Activated T-helper 1 cell treated with anti-CD3 and anti-CD28 coated beads, Interleukin-12 subunit alpha, Interleukin-12 subunit beta, Interleukin-2, Interleukin-4 antibody, amounts not matched to agents 30 ng/mL and 10 ng/mL and 1 ng/mL, durations not matched to agents 14 hours and 24 hours and 36 hours (primary cell): ENCODE measurements at regions of chr7 and their contacts with region 1.

Region 1: DNA sequence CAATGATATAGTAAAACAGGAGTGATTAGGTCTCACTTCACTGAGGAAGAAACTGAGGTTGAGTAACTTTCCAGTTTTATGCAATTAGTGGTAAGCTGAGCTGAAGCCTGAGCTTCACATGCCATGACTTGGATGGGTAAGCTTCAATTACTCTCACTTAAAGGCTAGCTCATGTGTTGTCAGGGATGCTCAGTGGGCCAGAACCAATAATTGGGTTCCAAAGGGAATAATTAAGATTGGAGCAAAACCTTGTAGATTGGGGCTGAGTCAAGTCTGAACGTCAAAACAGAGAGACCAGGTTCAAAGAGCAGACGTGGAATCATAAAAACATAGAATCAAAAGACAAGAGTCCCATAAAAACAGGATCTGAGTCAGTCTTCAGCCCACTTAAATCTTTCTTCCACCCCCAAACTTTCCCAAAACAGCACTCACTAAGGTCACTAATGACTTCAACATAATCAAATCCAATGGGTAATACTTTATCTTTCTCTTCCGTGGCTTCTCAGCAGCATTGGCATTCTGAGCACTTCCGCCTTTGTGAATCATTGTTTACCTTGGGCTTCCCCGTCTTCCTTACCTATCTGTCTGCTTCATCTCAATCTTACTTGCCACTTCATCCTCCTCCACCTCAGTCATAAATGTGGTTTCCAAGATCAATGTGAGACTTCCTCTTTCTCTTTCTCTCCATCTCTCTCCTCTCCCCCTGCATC is 23.0 kb upstream of the EGFR start:
- DNase-seq: peak; percentile 32
- H3K4me3 Mint-ChIP-seq: peak overlapping the region; percentile 19
- H3K27ac Mint-ChIP-seq: peak overlapping the region; percentile 70
- H3K4me1 Mint-ChIP-seq: peaks cover 26% of the 10 kb centered on the region
- H3K27me3 Mint-ChIP-seq: peaks cover 10% of the 10 kb centered on the region

Region 2: DNA sequence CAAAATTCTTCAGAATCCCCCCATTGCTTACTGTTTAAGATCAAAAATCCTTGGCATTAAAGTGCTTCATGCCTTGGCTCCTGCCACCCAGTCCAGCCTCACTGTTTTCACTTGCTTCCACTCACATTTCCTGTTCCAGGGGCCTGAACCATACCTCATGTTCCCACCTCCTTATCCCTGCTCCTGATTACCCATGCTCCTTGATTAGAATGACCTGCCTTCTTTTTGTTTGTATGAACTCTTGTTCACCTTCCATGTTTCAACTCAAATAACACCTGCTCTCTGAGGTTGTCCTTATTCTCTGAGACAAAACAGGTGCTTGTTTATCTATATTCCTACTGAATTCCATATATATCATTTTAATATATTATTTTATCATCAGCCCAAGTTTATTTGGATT is 530.7 kb before region 1 on chr7:
- intact Hi-C with region 1: no loop called
- DNase-seq: no peak
- H3K4me3 Mint-ChIP-seq: no peak overlapping the region
- H3K27ac Mint-ChIP-seq: no peak overlapping the region
- H3K4me1 Mint-ChIP-seq: no peaks in the 10 kb centered on the region
- H3K27me3 Mint-ChIP-seq: no peaks in the 10 kb centered on the region

Region 3: DNA sequence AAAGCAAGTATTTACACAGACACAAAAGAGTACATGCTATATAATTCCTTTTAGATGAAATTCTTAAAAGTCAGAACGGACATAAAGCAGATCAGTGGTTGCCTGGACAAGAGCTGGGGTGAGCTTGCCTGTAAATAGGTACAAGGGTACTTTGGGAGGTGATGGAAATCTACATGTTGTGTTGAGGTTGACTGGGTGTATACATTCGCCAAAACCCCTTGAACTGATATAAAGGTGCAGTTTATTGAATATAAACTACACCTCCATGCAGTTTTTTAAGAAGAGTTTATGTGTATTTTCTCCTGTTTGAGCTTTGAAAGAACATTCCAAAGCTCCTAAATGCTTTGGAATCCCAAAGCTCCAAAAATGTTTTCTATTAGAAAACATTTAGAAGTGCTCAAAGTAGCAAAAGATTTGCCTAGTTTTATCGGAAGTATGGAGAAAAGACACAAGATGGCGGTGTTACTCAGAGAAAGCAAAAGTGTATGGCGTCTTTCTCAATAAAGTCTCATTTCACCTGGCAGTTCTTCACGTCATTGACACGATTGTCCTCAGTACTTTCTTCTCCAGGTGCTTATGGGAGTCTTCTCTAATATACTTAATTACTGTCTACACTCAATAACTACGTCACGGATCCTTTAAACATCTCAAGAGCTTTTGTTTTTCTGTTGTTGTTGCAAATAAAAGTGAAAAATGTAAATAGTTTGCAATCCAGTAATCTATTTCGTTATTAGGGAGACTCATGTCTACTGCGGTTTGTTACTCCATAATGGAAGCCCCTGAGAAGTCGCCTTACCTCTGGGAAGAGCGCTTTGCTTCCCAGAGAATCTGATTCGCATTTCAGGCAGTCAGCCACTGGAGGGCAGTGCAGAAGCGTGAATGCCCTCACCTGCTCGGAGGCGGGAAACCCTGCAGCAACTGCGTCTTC is 222.1 kb before region 1 on chr7:
- intact Hi-C with region 1: loop called (anchors 5 kb)
- DNase-seq: peak; percentile 53
- H3K4me3 Mint-ChIP-seq: peak overlapping the region; percentile 70
- H3K27ac Mint-ChIP-seq: no peak overlapping the region
- H3K4me1 Mint-ChIP-seq: peaks cover 12% of the 10 kb centered on the region
- H3K27me3 Mint-ChIP-seq: peaks cover 27% of the 10 kb centered on the region

Region 4: GRCh38 chr7:55018361-55019190 is 22.8 kb after region 1 on chr7 and contains the start of gene EGFR:
- intact Hi-C with region 1: no loop called
- DNase-seq: no peak
- H3K4me3 Mint-ChIP-seq: peak within 1 kb of the TSS; percentile 33
- H3K27ac Mint-ChIP-seq: no peak within 1 kb of the TSS
- H3K4me1 Mint-ChIP-seq: no peaks in the 10 kb centered on the region
- H3K27me3 Mint-ChIP-seq: peaks cover 58% of the 10 kb centered on the region
- total RNA-seq, gene EGFR: 0.10 TPM in 1 of 2 replicates, not detected in the other

Region 5: GRCh38 chr7:55086413-55087201 is 90.8 kb after region 1 on chr7:
- intact Hi-C with region 1: loop called (anchors 2 kb)
- DNase-seq: no peak
- H3K4me3 Mint-ChIP-seq: peak overlapping the region; percentile 52
- H3K27ac Mint-ChIP-seq: peak overlapping the region; percentile 51
- H3K4me1 Mint-ChIP-seq: peaks cover 25% of the 10 kb centered on the region
- H3K27me3 Mint-ChIP-seq: peaks cover 29% of the 10 kb centered on the region

Region 6: DNA sequence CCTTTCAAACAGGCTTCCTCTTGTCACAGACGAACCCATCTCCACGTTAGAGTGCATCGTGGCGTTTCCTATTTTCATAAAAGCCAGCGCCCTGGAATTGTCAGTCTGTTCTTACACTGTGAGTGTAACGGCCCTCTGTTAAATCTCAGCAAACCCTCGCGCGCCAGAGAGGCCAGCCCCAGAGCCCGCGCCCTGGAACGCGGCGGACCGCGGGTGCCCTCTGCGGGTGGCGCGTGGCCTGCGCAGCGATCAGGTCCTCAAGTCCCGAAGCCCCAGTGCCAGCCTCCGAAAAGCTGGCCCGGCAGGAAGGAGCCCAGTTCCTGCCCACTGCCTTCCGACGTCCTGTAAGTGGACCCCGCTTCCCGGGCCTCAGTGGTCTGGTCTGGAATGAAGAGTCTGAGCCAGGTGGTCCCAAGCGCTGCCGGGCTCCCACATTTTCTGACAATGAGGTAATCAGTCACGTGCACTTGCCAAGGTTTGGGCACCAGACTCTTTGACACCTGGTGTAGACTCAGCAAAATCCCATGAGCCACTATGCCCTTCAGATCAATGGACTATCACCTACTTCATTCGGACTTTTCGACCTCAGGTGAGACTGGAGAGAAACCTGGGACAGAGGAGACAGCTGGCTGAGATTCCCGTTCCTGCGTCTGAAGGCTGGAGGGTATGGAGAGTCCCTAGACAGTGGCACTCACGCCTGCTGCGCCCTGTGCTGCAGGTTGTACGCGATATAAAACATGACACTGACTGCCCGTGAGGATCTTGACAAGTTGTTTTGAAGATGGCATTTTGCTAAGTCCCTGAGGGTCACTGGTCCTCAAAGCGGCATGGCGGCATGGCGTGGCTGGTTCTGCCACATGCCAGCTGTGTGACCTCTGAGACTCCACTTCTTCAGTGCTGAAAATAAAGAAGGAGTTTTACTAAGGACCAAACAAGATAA is 260.0 kb after region 1 on chr7:
- intact Hi-C with region 1: loop called (anchors 1 kb)
- DNase-seq: peak; percentile 57
- H3K4me3 Mint-ChIP-seq: peak overlapping the region; percentile 85
- H3K27ac Mint-ChIP-seq: peak overlapping the region; percentile 53
- H3K4me1 Mint-ChIP-seq: peaks cover 12% of the 10 kb centered on the region
- H3K27me3 Mint-ChIP-seq: peaks cover 51% of the 10 kb centered on the region

Region 7: GRCh38 chr7:55365675-55366460 is 370.1 kb after region 1 on chr7:
- intact Hi-C with region 1: loop called (anchors 5 kb)
- DNase-seq: peak; percentile 94
- H3K4me3 Mint-ChIP-seq: peak overlapping the region; percentile 98
- H3K27ac Mint-ChIP-seq: peak overlapping the region; percentile 98
- H3K4me1 Mint-ChIP-seq: peaks cover 19% of the 10 kb centered on the region
- H3K27me3 Mint-ChIP-seq: peaks cover 8% of the 10 kb centered on the region